ENCODE measurements at regions of chr20 and their contacts with region 1.

Region 1: DNA sequence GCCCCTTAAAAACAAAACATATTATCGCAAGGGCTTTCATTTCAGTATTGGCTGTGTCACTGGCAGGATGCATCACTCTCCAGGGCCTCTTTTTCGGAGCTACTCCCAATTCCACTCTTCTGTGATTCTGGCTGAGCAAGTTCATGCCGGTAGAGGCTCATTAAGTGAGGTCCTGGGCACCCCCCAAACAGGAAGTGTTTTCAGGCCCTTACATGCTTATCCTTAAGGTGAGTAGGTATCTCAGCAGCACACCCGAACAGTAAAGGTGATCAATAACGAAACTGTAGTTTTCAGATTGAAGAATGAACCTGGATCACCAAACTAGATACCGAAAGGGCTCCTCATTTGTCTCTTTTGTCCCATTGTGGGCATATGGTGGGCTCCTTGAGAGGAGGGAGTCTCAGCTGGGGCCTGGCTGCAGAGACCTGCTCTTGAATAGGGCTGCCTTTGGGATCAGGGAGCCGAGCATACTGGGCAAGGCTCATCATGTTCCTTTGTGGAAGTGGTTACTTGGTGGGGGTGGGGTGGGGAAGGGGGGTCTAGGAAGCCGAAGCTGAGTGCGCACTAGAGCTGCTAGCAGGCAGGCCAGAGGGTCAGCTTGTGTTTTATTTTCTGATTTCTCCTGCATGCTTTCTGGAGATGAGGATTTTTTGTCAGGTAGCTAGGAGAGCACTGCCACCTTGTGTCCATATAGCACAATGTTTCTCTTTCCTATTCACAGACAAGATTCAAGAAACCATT is 65.2 kb downstream of the CDS2 start:
- DNase-seq: no peak
- ATAC-seq: peak; percentile 74
- H3K4me3 Mint-ChIP-seq: no peak overlapping the region
- H3K27ac Mint-ChIP-seq: peak overlapping the region; percentile 69
- H3K4me1 Mint-ChIP-seq: peaks cover 5% of the 10 kb centered on the region
- H3K27me3 Mint-ChIP-seq: no peaks in the 10 kb centered on the region

Region 2: GRCh38 chr20:5126512-5127203 is 65.3 kb before region 1 on chr20 and contains the start of gene CDS2:
- POLR2A ChIA-PET with region 1: interaction called, 22 read pairs
- DNase-seq: peak; percentile 100
- ATAC-seq: peak; percentile 90
- H3K4me3 Mint-ChIP-seq: peak within 1 kb of the TSS; percentile 97
- H3K27ac Mint-ChIP-seq: peak within 1 kb of the TSS; percentile 96
- H3K4me1 Mint-ChIP-seq: peaks cover 33% of the 10 kb centered on the region
- H3K27me3 Mint-ChIP-seq: no peaks in the 10 kb centered on the region
- total RNA-seq, gene CDS2: 59.1 to 59.2 TPM

Measured in activated naive CD8-positive, alpha-beta T cell treated with anti-CD3 and anti-CD28 coated beads, Interleukin-2, amount 10 ng/mL, durations not matched to agents 7 days and 5 days (primary cell).